GM18951 (cell line): ENCODE measurements at regions of chr10 and their contacts with region 1.

Region 1: DNA sequence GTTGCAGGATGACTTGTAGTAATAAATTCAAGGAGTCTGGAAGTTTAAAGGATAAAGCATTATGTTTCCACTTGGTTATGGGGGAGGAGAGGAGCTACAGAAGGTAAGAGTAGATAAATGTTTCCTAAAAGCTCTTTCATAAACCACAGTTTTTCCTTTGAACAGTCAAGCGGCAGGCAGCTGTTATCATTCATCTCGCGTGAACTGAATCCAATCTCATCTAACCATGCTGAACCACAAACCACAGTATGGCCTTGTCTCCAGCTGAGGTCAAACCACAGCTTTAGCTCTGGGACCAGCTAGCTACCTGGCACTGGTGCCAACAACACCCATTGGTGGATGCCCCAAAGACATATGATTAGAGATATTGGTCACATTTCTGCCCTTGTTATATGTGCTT is 63.3 kb downstream of the NOC3L start:
- POLR2A ChIP-seq: no peak

Region 2: GRCh38 chr10:94358480-94358879 is 59.1 kb after region 1 on chr10:
- in situ Hi-C with region 1: no loop called
- POLR2A ChIP-seq: no peak

Region 3: GRCh38 chr10:94443047-94443446 is 143.6 kb after region 1 on chr10:
- in situ Hi-C with region 1: loop called (anchors 10 kb)
- POLR2A ChIP-seq: no peak

Region 4: GRCh38 chr10:94645285-94645684 is 345.9 kb after region 1 on chr10:
- in situ Hi-C with region 1: no loop called
- POLR2A ChIP-seq: no peak